Activated B cell treated with CpG ODN at 0.5 μM for 24 hours (primary cell): ENCODE measurements at regions of chr17 and their contacts with region 1.

Region 1: GRCh38 chr17:78176548-78177025 is 8.2 kb downstream of the SYNGR2 start:
- DNase-seq: peak; percentile 76
- ATAC-seq: peak; percentile 69
- H3K4me3 Mint-ChIP-seq: no peak overlapping the region
- H3K27ac Mint-ChIP-seq: peak overlapping the region; percentile 63
- H3K4me1 Mint-ChIP-seq: peaks cover 79% of the 10 kb centered on the region
- H3K27me3 Mint-ChIP-seq: no peaks in the 10 kb centered on the region
- CTCF ChIP-seq: peak; percentile 92

Region 2: DNA sequence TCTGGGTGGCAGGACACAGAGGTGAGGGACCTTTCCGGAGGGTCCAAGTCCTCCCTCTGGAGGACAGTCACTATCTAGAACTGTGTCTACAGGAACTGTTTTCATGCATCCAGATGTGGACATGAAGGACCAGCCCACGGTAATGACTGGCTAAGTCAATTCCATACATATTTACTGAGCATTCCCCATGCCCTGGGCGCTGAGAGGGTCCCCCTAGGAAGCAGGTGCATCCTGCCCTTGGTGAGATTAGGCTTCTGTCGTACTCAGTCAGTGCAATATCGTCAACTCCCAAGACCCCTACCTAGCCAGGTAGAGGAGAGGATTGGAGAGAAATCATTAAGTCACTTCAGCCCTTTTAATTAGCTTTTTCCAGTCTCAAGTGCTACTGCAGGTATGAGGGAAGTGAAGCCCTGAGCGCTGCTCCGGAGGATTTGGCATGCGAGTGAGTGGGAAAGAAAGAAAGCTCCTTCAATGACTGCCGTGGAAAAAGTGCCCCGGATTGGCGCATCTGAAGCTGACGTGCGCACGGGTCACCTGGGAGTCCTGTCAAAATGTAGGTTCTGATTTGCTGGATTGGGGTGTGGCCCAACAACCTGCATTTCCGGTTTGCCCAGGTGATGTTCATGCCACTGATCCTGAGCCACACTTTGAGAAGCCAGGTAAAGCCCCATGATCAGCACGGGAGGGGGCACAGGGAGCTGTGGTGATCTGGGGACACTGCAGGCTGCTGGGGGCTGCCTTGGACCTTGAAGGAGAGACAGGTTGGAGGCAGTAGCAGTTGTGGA is 585.4 kb before region 1 on chr17:
- CTCF ChIA-PET with region 1: no interaction called
- POLR2A ChIA-PET with region 1: no interaction called
- intact Hi-C with region 1: no loop called
- DNase-seq: no peak
- ATAC-seq: no peak
- H3K4me3 Mint-ChIP-seq: no peak overlapping the region
- H3K27ac Mint-ChIP-seq: no peak overlapping the region
- H3K4me1 Mint-ChIP-seq: no peaks in the 10 kb centered on the region
- H3K27me3 Mint-ChIP-seq: peaks cover 31% of the 10 kb centered on the region
- CTCF ChIP-seq: no peak

Region 3: DNA sequence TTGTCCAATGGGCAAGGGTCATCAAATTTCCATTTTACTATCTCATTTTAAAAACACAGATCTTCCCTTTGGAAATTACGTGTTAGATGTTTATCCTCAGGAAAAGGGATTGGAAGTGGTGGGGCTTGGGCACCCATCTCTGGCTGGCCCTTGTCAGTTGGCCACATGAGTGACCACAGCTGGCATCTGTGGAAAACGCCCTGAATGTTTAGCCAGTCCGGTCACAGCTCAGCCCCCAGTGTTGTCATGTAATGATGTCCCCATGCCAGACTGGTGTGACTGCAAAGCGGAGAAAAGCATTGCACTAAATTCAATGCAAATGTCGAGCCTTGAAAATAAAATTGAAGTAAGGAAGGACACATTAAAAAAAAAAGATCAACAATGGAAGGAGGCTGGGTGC is 101.0 kb before region 1 on chr17:
- CTCF ChIA-PET with region 1: no interaction called
- POLR2A ChIA-PET with region 1: no interaction called
- intact Hi-C with region 1: no loop called
- DNase-seq: no peak
- ATAC-seq: no peak
- H3K4me3 Mint-ChIP-seq: no peak overlapping the region
- H3K27ac Mint-ChIP-seq: no peak overlapping the region
- H3K4me1 Mint-ChIP-seq: no peaks in the 10 kb centered on the region
- H3K27me3 Mint-ChIP-seq: no peaks in the 10 kb centered on the region
- CTCF ChIP-seq: no peak

Region 4: GRCh38 chr17:78120971-78121800 is 55.4 kb before region 1 on chr17:
- CTCF ChIA-PET with region 1: interaction called, 220 read pairs
- POLR2A ChIA-PET with region 1: interaction called, 2,404 read pairs
- intact Hi-C with region 1: no loop called
- DNase-seq: peak; percentile 37
- ATAC-seq: no peak
- H3K4me3 Mint-ChIP-seq: peak overlapping the region; percentile 65
- H3K27ac Mint-ChIP-seq: peak overlapping the region; percentile 81
- H3K4me1 Mint-ChIP-seq: peaks cover 62% of the 10 kb centered on the region
- H3K27me3 Mint-ChIP-seq: no peaks in the 10 kb centered on the region
- CTCF ChIP-seq: no peak

Region 5: GRCh38 chr17:78128551-78129350 is 47.8 kb before region 1 on chr17 and contains the start of gene TMC6:
- CTCF ChIA-PET with region 1: interaction called, 220 read pairs
- POLR2A ChIA-PET with region 1: interaction called, 2,404 read pairs
- intact Hi-C with region 1: loop called (anchors 1 kb)
- DNase-seq: peak; percentile 66
- ATAC-seq: peak; percentile 17
- H3K4me3 Mint-ChIP-seq: peak within 1 kb of the TSS; percentile 92
- H3K27ac Mint-ChIP-seq: peak within 1 kb of the TSS; percentile 93
- H3K4me1 Mint-ChIP-seq: peaks cover 74% of the 10 kb centered on the region
- H3K27me3 Mint-ChIP-seq: no peaks in the 10 kb centered on the region
- CTCF ChIP-seq: no peak
- total RNA-seq, gene TMC6: 746 and 896 TPM in 2 replicates

Region 6: DNA sequence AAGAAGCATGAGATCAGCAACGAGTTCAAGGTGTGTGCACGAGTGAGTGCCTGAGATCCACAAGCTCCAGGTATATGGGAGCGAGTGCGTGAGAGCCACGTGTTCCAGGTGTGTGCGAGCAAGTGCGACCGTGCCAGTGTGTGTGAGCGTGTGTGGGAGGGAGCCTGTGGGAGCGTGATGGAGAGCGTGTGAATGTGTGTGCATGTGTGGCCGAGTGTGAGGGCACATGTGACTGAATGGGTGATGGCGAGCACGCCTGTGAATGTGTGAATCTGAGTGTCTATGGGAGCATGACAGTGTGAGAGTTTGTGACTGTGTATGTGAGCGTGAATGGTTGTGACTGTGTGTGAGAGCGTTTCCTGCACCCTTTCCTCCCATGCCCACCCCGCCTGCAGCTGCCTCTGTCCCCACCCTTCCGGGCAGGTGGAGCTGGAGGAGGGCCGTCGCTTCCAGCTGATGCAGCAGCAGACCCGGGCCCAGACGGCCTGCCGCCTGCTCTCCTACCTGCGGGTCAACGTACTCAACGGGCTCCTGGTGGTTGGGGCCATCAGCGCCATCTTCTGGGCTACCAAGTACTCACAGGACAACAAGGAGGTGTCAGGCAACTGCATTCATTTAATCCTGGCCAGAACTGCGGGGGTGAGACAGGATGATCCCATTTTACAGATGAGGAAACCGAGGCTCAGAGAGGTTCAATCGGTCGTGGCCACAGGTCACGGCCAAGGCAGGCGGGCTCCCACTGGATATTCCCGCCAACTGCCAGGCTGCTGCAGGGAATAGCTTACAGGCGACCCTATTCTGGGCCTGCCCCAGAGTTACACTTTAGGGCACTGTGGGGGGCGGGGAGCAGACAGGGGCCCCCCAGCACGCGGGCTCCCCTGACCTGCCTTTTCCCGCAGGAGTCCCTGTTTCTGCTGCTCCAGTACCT is 42.4 kb before region 1 on chr17:
- CTCF ChIA-PET with region 1: interaction called, 220 read pairs
- POLR2A ChIA-PET with region 1: interaction called, 2,404 read pairs
- intact Hi-C with region 1: loop called (anchors 1 kb)
- DNase-seq: peak; percentile 59
- ATAC-seq: peak; percentile 15
- H3K4me3 Mint-ChIP-seq: peak overlapping the region; percentile 95
- H3K27ac Mint-ChIP-seq: peak overlapping the region; percentile 81
- H3K4me1 Mint-ChIP-seq: peaks cover 87% of the 10 kb centered on the region
- H3K27me3 Mint-ChIP-seq: no peaks in the 10 kb centered on the region
- CTCF ChIP-seq: peak; percentile 69

Region 7: DNA sequence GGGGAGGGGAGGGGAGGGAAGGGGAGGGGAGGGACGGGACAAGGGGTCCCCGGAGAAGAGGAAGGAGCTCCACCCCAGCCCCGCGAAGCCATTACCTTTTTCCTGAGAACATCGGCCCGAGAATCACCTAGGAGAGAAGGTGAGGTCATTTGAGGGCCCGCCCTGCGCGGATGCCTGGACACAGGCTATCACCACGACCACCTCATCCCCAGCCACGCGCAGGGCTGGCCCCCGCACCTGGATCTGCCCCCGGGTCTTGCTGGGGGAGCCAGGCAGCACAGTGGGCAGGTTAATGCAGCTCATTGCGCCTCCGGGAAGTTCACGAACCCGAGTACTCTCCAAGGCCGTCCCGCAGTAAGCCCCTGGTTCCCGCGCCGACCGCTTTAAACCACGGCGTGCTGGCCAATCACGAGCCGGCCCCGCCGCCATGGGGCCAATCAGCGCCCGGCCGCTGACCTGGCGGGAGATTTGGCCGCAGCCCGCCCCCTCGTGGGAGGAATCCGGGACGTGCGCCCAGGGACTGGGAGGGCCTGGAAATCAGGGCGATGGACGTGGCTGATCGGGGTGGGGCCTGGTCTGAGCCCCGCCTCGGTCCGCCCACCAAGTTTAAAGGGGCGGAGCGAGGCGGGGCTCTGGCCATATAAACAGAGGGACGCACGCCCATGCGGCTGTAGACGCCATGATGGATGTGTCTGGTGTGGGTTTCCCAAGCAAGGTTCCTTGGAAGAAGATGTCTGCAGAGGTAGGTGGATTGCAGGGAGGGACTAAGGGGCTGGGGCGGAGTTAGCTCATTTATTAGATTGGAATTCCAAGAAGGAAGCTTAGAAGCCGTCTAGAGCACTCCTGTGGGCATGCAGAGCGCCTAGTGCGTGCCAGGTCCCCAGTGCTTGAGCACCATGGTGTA is 10.4 kb after region 1 on chr17 and contains the starts of genes AFMID and TK1:
- CTCF ChIA-PET with region 1: interaction called, 9 read pairs
- POLR2A ChIA-PET with region 1: interaction called, 42 read pairs
- intact Hi-C with region 1: no loop called
- DNase-seq: peak; percentile 83
- ATAC-seq: peak; percentile 96
- H3K4me3 Mint-ChIP-seq: peak within 1 kb of the TSS; percentile 85
- H3K27ac Mint-ChIP-seq: peak within 1 kb of the TSS; percentile 54
- H3K4me1 Mint-ChIP-seq: peaks cover 18% of the 10 kb centered on the region
- H3K27me3 Mint-ChIP-seq: no peaks in the 10 kb centered on the region
- CTCF ChIP-seq: no peak
- total RNA-seq, gene AFMID: 11.2 and 15.4 TPM in 2 replicates
- total RNA-seq, gene TK1: 3.8 TPM in 2 replicates